ENCODE measurements at regions of chr5 and their contacts with region 1.

Region 1: DNA sequence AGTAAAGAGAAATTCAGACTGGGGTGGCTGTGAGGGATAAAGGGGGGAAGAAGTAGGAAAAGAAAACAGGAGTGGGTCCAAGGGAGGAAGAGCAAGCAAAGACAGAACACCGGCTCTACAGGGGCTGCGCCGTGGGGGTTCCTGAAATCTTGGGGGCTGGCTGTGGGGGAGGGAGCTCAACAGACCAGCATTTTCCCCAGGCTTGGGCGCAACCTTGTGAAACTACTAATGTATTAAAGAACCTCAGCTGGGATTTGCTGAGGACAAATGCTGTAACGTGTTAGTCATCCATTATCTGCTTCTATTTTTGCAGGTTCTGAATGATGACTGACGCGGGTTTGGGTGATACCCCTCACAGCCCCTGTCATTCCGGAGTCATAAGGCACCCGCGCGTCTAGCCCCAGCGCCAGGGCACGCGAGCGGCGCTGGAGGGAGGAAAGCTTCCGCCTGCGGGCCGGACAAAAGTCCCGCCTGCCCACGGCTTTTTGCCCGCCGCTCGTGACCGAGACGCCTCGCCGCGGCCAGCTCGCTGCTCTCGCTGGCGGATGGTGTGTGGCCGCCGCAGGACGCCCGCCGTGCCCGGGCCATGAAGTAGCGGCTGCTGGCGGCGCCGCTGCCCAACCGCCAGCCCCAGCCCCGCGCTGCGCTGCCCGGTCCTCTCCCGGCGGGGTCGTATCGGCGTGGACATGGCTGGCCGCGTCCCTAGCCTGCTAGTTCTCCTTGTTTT is 110.6 kb downstream of the PAM start:
- DNase-seq: peak; percentile 92

Region 2: DNA sequence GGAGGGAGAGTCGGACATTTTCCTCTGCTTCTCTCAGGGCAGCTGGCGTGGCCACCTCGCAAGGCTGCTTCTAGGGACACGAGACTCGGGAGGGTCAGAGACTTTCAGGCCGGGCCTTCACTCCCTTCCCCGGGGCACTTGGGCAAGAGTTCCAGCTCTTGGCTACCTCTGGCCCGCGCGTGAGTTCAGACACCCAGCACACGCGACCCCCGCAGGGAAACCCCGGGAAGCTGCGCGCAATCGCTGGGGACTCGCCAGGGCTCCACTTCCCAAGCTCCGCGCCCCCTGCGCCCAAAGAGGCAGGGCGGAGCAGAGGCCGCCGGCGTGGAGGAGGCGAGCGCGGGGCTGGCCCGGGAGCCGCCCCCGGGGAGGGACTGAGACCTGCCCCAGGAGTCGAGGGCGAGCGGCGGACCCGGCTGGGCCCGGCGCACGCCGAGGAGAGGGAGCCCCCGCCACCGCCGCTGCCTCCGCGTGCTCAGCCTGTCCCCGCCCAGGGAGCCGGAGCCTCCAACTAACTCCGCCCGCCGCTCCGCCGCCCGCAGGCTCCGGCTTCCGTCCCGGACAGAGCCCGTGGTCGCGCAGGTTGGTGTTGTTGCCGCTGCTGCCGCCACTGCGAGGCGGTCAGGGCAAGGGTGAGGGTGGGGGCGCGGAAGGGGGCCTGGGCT is 110.8 kb before region 1 on chr5 and contains the start of gene PAM:
- intact Hi-C with region 1: loop called (anchors 1 kb)
- DNase-seq: peak; percentile 91
- total RNA-seq, gene PAM: 1,080 TPM

Region 3: GRCh38 chr5:102778478-102778877 is 87.2 kb before region 1 on chr5:
- intact Hi-C with region 1: loop called (anchors 5 kb)
- DNase-seq: no peak

Region 4: GRCh38 chr5:102796009-102796408 is 69.7 kb before region 1 on chr5:
- intact Hi-C with region 1: loop called (anchors 5 kb)
- DNase-seq: no peak

Region 5: GRCh38 chr5:102911973-102912372 is 46.3 kb after region 1 on chr5:
- intact Hi-C with region 1: loop called (anchors 5 kb)
- DNase-seq: no peak

Region 6: GRCh38 chr5:102946971-102947370 is 81.3 kb after region 1 on chr5:
- intact Hi-C with region 1: no loop called
- DNase-seq: peak; percentile 73

Region 7: GRCh38 chr5:102959055-102959454 is 93.4 kb after region 1 on chr5:
- intact Hi-C with region 1: loop called (anchors 5 kb)
- DNase-seq: no peak